ENCODE measurements at regions of chr12 and their contacts with region 1.

Region 1: DNA sequence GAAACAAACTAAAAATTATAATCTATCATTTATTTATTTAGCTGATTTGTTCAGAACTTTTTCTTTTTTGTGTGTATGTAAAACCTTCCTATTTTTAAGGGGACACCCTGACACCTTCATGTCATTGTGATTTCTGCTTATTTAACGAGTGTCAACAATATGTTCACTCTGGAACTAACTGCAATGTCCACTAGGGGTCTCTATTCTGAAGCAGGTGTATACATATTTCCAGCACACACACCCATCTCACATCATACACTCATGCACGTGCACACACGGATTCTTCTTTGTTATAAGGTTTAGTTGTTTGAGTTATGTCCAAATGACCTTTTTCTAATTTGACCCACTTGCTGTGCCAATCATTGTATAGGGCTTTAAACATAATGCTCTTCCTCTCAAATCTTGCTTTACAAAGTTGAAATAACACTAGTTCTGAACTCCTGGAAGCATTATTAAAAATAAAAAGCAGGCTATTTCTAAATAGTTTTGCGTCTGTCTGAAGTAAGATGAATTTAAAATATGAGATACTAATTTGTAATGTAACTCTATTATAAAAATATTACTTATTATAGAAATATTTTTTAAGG is 15.5 kb downstream of the E2F7 start:
- DNase-seq: peak in 4 of 5 donors; percentile 41 to 49 (median 43)
- H3K4me3 ChIP-seq: no peak overlapping the region
- H3K4me3 Mint-ChIP-seq: no peak overlapping the region
- H3K27ac ChIP-seq: no peak overlapping the region
- H3K27ac Mint-ChIP-seq: no peak overlapping the region
- H3K4me1 ChIP-seq: no peaks in the 10 kb centered on the region
- H3K4me1 Mint-ChIP-seq: peaks cover 0 to 8% (median 4%) of the 10 kb centered on the region in 4 donors
- H3K27me3 ChIP-seq: no peaks in the 10 kb centered on the region
- H3K27me3 Mint-ChIP-seq: no peaks in the 10 kb centered on the region

Region 2: GRCh38 chr12:77031745-77032144 is 18.1 kb before region 1 on chr12:
- CTCF ChIA-PET with region 1: interaction called, 12 read pairs
- POLR2A ChIA-PET with region 1: no interaction called
- intact Hi-C with region 1: no loop called
- DNase-seq: no peak
- H3K4me3 ChIP-seq: no peak overlapping the region
- H3K4me3 Mint-ChIP-seq: no peak overlapping the region
- H3K27ac ChIP-seq: no peak overlapping the region
- H3K27ac Mint-ChIP-seq: no peak overlapping the region
- H3K4me1 ChIP-seq: no peaks in the 10 kb centered on the region
- H3K4me1 Mint-ChIP-seq: peaks cover 0 to 8% (median 6%) of the 10 kb centered on the region in 4 donors
- H3K27me3 ChIP-seq: no peaks in the 10 kb centered on the region
- H3K27me3 Mint-ChIP-seq: no peaks in the 10 kb centered on the region

Region 3: GRCh38 chr12:77065361-77066204 is 15.7 kb after region 1 on chr12 and contains the start of gene E2F7:
- CTCF ChIA-PET with region 1: interaction called, 40 read pairs
- POLR2A ChIA-PET with region 1: no interaction called
- intact Hi-C with region 1: no loop called
- DNase-seq: peak; percentile 73 to 81 (median 78)
- H3K4me3 ChIP-seq: peak within 1 kb of the TSS in 1 of 2 donors; percentile 67
- H3K4me3 Mint-ChIP-seq: peak within 1 kb of the TSS; percentile 82 to 91 (median 90)
- H3K27ac ChIP-seq: no peak within 1 kb of the TSS
- H3K27ac Mint-ChIP-seq: peak within 1 kb of the TSS in 6 of 7 donors; percentile 7 to 81 (median 54)
- H3K4me1 ChIP-seq: peaks cover 11% of the 10 kb centered on the region
- H3K4me1 Mint-ChIP-seq: peaks cover 4 to 7% (median 5%) of the 10 kb centered on the region in 4 donors
- H3K27me3 ChIP-seq: no peaks in the 10 kb centered on the region
- H3K27me3 Mint-ChIP-seq: peaks cover 7 to 14% of the 10 kb centered on the region in 2 donors
- total RNA-seq, gene E2F7: 0.17 to 0.26 TPM

Region 4: DNA sequence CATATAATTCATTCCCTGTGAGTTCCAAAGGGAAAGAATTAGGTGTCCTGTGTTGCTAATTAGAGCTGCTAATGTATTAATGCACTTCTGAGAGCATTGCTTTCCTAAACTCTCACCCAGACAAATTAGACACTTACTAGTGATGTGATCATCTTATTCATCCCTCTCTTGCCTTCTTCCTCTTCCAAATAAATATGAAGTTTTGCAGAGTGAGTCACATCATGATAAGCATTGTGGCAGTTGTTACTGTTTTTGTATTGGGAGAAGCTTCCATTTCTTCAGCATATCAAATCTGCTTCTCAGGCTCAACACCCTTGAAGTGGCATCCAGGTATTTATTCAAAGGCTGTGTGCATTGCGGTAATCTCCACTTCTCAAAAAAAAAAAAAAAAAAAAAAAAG is 52.8 kb after region 1 on chr12:
- CTCF ChIA-PET with region 1: no interaction called
- POLR2A ChIA-PET with region 1: no interaction called
- intact Hi-C with region 1: no loop called
- DNase-seq: no peak
- H3K4me3 ChIP-seq: no peak overlapping the region
- H3K4me3 Mint-ChIP-seq: no peak overlapping the region
- H3K27ac ChIP-seq: no peak overlapping the region
- H3K27ac Mint-ChIP-seq: no peak overlapping the region
- H3K4me1 ChIP-seq: no peaks in the 10 kb centered on the region
- H3K4me1 Mint-ChIP-seq: no peaks in the 10 kb centered on the region
- H3K27me3 ChIP-seq: no peaks in the 10 kb centered on the region
- H3K27me3 Mint-ChIP-seq: peaks cover 6% of the 10 kb centered on the region in 2 donors